ENCODE measurements at regions of chr11 and their contacts with region 1.

Region 1: DNA sequence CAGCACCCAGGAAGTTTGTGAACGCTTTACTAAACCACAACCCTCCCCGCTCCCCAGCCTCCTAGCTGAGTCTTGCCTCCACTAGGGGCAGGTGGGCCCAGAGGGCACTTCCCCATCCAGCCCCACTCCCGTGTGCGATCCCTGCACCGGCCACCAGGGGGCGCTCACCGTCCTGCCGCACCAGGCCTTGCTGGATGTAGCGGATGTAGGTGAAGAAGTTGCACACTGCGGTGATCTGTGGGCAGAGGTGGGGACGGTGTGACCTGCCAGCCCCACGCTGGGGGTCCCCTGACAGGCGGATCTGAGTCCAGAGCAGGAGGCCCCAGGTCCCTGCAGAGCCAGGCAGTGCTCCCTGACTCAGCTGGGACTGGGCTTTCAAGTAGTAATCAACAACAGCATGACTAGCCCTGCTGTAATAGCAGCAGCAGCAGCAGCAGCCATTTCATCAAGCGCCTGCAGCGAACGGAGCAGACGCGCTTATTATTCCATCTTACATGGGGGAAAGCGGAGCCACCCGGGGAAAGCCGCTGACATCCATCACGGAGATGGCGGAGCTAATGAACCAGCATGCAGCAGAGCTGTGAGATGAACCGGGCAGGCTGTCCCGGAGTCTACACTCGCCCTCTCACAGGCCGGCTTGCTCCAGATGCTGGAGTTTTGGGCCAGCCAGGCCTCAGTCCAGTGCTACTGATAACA is 7.9 kb upstream of the FADS3 start:
- DNase-seq: peak; percentile 87 to 96
- ATAC-seq: peak; percentile 72 to 92
- H3K4me3 ChIP-seq: no peak overlapping the region
- H3K27ac ChIP-seq: peak overlapping the region; percentile 66 to 82; a peak in 5 of 6 replicates
- H3K4me1 ChIP-seq: peaks cover 19% of the 10 kb centered on the region
- CTCF ChIP-seq: peak; percentile 97
- EP300 ChIP-seq: no peak
- POLR2A ChIP-seq: no peak
- RAD21 ChIP-seq: peak; percentile 92 to 93

Region 2: DNA sequence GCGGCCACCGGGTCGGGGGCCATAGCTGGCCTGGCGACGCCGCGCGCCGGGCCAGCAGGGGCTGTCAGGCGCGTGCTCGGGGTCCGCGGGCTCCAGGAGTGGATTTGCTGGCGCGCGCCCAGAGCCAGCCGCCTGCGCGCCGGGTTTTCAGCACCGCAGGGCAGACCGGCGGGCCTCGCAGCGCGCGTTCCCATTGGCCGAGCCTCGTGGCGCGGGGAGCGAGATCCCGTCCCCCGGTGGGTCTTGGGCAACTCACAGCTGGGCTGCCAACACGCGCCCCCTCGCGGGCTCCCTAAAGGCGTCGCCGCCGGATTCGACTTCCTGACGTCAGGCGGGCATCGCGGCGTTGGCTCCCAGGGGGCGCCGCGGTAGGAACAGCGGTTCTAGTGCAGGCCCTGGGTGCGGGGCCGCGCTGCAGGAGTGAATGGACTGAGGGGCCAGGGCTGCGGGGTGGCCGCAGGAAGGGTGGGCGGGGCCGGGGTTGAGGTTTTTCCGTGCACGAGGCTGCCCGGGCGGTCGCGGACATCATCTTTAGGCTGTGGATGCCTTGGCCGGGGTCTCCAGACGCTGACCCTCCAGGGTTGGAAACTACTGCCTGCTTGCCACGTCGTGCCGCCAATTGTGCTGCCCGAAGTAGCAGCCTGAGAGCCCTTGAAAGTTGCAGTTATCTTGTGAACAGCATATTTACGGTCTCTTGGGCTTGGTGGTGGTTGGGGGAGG is 82.4 kb before region 1 on chr11 and contains the start of gene FADS1:
- CTCF ChIA-PET with region 1: interaction called, 10 read pairs
- POLR2A ChIA-PET with region 1: no interaction called
- DNase-seq: peak; percentile 96 to 97
- ATAC-seq: peak; percentile 67 to 75
- H3K4me3 ChIP-seq: peak within 1 kb of the TSS; percentile 83
- H3K27ac ChIP-seq: peak within 1 kb of the TSS; percentile 98 to 99
- H3K4me1 ChIP-seq: peaks cover 44% of the 10 kb centered on the region
- CTCF ChIP-seq: peak; percentile 76
- EP300 ChIP-seq: 0 out of 5 replicates have a peak, but pooled peaks of 1 of the 2 experiments have one; percentile 10
- POLR2A ChIP-seq: peak; percentile 53
- RAD21 ChIP-seq: peak; percentile 42 to 60; a peak in 4 of 5 replicates
- polyA plus RNA-seq, gene FADS1: 163 and 175 TPM in 2 replicates

Region 3: DNA sequence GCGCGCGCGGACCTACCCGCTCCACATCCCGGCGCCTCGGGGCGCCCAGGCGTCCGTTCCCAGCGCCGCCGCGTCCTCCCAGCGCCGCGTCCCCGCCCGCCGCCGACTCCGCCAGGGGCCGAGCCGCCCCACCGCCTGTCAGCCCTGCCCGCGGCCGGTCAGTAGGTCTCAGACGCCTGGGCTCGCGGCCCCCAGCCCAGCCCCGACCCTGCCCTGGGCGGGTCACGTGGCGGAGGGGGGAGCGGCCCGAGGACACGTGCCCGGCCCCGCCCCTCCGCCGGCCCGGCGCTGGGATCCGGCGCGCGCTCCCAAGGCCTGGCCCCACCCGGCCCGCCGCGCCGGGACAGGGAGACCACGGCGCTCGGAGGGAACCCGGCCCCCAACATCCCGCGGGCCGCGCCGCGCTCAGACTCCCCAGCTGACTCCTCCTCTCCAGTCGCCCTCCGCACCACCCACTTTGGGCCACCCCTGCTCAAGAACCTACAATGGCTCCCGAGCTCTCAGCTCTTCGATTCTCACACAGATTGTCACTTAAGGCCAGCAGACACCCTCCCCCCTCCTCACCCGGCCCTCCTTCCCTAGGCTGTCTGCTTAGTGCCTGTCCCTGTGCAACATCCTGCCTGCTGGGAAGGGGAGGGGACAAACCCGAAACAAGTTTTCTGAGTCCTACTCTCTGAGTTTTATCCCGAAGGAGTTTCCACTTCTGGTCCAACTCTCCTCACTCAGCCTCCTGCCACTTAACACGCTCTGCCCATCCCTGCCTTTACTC is 18.2 kb after region 1 on chr11 and contains the start of gene RAB3IL1:
- CTCF ChIA-PET with region 1: interaction called, 198 read pairs
- POLR2A ChIA-PET with region 1: no interaction called
- DNase-seq: peak; percentile 30 to 66
- ATAC-seq: peak; percentile 64 to 65
- H3K4me3 ChIP-seq: peak within 1 kb of the TSS; percentile 63
- H3K27ac ChIP-seq: peak within 1 kb of the TSS; percentile 79 to 94
- H3K4me1 ChIP-seq: peaks cover 24% of the 10 kb centered on the region
- CTCF ChIP-seq: no peak
- EP300 ChIP-seq: no peak
- POLR2A ChIP-seq: no peak
- RAD21 ChIP-seq: no peak
- polyA plus RNA-seq, gene RAB3IL1: 3.8 and 5.8 TPM in 2 replicates

Region 4: GRCh38 chr11:61947486-61948210 is 48.4 kb after region 1 on chr11:
- CTCF ChIA-PET with region 1: interaction called, 565 read pairs
- POLR2A ChIA-PET with region 1: interaction called, 5 read pairs
- DNase-seq: peak; percentile 82 to 89
- ATAC-seq: peak; percentile 83 to 91
- H3K4me3 ChIP-seq: no peak overlapping the region
- H3K27ac ChIP-seq: peak overlapping the region; percentile 71 to 72
- H3K4me1 ChIP-seq: peaks cover 35% of the 10 kb centered on the region
- CTCF ChIP-seq: peak; percentile 97
- EP300 ChIP-seq: no peak
- POLR2A ChIP-seq: no peak
- RAD21 ChIP-seq: peak; percentile 98 to 99

Region 5: GRCh38 chr11:62048065-62048464 is 148.8 kb after region 1 on chr11:
- CTCF ChIA-PET with region 1: interaction called, 103 read pairs
- POLR2A ChIA-PET with region 1: no interaction called
- DNase-seq: no peak
- ATAC-seq: no peak
- H3K4me3 ChIP-seq: no peak overlapping the region
- H3K27ac ChIP-seq: peak overlapping the region; percentile 50 to 69; a peak in 5 of 6 replicates
- H3K4me1 ChIP-seq: peaks cover 45% of the 10 kb centered on the region
- CTCF ChIP-seq: no peak
- EP300 ChIP-seq: no peak
- POLR2A ChIP-seq: no peak
- RAD21 ChIP-seq: no peak

Region 6: DNA sequence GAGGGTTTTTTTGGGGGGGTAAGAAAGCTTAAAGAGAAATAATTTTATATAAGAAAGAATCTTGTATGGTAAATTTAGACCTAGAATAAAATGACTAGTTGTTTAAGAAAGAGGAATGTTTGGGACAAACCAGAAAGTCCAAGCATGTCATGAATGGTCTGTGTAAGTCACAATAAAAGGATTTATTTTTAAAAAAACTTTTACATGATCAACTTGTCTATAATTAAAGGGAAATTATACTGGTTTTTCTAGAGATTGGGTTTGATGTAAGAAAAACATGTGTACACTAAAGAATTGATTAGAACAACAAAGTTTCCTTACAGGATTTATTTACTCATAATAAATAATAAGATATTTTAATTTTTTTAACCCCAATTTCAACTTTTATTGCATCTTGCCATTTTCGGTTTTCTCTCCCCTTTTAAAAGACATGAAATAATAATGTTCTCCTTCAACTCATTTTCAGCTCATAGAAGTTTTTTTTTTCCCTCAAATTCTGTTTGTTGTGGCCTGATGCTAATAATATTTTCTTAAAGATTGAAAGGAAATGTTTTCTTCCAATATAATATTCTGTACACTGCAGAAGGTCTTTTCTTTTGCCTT is 189.1 kb after region 1 on chr11:
- CTCF ChIA-PET with region 1: interaction called, 406 read pairs
- POLR2A ChIA-PET with region 1: no interaction called
- DNase-seq: peak in 1 of 2 experiments; percentile 28
- ATAC-seq: no peak
- H3K4me3 ChIP-seq: no peak overlapping the region
- H3K27ac ChIP-seq: no peak overlapping the region
- H3K4me1 ChIP-seq: no peaks in the 10 kb centered on the region
- CTCF ChIP-seq: no peak
- EP300 ChIP-seq: no peak
- POLR2A ChIP-seq: no peak
- RAD21 ChIP-seq: no peak

Measured in A549 (cell line).